ENCODE measurements at regions of chr11 and their contacts with region 1.

Region 1: DNA sequence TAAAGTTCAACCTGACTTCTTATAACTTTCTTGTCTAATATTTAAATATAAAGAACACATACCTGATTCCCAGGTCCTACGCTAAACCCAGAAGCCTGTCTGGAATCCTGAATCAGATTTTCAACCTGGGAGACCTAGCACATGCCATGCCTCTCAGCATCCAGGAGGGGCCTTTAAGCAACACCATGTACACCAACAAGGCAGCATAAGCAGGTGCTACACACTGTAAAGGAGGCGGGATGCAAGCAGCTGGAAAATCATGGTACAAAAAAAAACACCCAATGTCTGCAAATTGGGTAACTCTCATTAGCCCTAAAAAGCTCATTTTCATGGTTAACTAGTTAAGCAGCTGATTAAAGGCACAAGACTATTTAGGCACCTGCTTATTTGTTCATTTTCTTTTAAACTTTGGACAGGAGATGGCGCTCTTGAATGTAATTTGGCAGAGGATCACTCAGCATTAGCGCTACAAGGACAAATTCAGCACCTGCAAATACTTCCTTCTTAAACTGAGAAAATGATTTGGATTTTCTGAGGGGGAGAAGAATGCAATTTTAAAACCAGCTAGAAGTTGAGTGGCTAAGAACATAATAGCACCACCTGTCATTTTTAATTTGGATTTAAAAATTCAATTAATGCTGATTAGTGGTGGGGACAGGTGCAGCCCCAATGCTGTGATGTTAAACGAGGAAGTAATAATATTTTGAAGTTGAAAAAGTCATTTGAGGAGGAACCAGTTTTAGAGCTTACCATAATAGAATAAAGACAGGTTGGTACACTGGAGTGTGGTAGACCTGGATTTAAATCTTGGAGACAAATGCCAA is 104.0 kb downstream of the FAR1 start:
- DNase-seq: no peak
- ATAC-seq: no peak

Region 2: DNA sequence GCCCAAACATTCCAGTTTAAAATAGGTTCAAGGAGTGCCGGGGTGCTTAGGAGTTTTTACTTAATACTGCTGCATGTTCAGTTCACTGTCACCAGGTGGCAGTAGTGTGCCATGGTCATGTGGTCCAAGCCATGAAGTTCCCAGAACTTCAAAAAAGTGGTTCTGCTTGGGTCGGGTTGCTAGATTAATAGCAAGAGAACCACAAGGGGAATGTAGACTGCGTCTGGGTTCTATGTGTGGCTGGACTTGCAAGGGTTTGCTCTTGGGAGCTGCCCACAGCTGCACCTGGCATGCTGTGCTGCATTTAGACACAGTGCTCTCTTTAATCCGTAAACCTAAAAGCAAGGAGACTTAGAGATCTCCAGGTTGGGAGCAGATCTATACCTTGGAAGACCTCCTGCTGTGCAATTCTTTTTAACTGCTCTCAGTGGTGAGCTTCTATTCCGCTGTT is 183.6 kb after region 1 on chr11:
- intact Hi-C with region 1: loop called (anchors 10 kb)
- DNase-seq: no peak
- ATAC-seq: peak; percentile 50

Region 3: DNA sequence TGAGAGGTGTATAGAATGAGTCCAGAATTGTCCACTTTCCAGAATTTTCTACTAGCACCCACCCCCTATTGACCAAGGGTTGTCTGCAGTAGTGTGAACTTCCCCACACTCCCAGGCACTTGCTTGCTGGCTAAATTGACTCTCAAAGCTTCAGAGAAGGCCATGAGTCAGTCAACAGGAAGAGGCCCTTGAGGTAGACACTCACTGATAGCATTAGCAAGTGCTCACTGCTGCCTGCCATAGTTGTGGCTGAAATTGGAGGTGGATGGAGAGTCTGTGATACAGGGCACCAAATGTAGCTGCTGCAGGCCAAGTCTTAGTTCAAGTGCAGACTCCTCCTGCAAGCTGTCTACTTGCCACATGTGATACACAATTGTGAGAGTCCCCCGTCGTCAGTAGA is 346.9 kb after region 1 on chr11:
- intact Hi-C with region 1: no loop called
- DNase-seq: no peak
- ATAC-seq: no peak

Measured in Right ventricle myocardium inferior (tissue), 1 donor.